GM12878 (cell line): ENCODE measurements at regions of chr15 and their contacts with region 1.

Region 1: DNA sequence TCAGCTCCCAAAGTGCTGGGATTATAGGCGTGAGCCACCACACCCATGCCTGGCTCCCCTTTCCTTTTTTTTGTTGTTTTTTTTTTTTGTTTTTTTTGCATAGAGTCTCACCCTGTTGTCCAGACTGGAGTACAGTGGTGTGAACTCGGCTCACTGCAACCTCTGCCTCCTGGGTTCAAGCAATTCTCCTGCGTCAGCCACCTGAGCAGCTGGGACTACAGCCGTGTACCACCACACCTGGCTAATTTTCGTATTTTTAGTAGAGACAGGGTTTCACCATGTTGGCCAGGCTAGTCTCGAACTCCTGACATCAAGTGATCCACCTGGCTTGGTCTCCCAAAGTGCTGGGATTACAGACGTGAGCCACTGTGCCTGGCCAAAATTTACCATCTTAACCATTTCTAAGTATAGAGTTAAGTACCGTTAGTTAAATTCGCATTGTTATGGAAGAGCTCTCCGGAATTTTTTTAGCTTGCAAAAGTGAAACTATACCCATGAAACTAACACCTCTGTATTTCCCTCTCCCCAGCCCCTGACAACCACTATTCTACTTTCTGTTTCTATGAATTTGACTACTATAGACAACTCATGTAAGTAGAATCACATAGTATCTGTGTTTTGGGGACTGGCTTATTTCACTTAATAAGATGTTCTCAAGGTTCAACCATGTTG is 70.9 kb upstream of the C15orf39 start:
- DNase-seq: peak; percentile 89
- ATAC-seq: peak; percentile 92
- H3K4me3 ChIP-seq: peak overlapping the region; percentile 13; the same call in 1 of the 2 replicates
- H3K27ac ChIP-seq: peak overlapping the region; percentile 99
- H3K4me1 ChIP-seq: peaks cover 67% of the 10 kb centered on the region
- H3K27me3 ChIP-seq: no peaks in the 10 kb centered on the region
- CTCF ChIP-seq: no peak
- EP300 ChIP-seq: peak; percentile 55 to 82; a peak in 3 of 4 replicates
- POLR2A ChIP-seq: no peak
- RAD21 ChIP-seq: 0 out of 2 replicates have a peak, but pooled peaks have one; percentile 9

Region 2: GRCh38 chr15:75161917-75162414 is 31.2 kb after region 1 on chr15:
- CTCF ChIA-PET with region 1: no interaction called
- POLR2A ChIA-PET with region 1: no interaction called
- RAD21 ChIA-PET with region 1: no interaction called
- SMC1A ChIA-PET with region 1: no interaction called
- in situ Hi-C with region 1: no loop called
- intact Hi-C with region 1: no loop called
- DNase-seq: no peak
- ATAC-seq: no peak
- H3K4me3 ChIP-seq: no peak overlapping the region
- H3K27ac ChIP-seq: no peak overlapping the region
- H3K4me1 ChIP-seq: peaks cover 4% of the 10 kb centered on the region
- H3K27me3 ChIP-seq: no peaks in the 10 kb centered on the region
- CTCF ChIP-seq: no peak
- EP300 ChIP-seq: no peak
- POLR2A ChIP-seq: no peak
- RAD21 ChIP-seq: no peak

Region 3: DNA sequence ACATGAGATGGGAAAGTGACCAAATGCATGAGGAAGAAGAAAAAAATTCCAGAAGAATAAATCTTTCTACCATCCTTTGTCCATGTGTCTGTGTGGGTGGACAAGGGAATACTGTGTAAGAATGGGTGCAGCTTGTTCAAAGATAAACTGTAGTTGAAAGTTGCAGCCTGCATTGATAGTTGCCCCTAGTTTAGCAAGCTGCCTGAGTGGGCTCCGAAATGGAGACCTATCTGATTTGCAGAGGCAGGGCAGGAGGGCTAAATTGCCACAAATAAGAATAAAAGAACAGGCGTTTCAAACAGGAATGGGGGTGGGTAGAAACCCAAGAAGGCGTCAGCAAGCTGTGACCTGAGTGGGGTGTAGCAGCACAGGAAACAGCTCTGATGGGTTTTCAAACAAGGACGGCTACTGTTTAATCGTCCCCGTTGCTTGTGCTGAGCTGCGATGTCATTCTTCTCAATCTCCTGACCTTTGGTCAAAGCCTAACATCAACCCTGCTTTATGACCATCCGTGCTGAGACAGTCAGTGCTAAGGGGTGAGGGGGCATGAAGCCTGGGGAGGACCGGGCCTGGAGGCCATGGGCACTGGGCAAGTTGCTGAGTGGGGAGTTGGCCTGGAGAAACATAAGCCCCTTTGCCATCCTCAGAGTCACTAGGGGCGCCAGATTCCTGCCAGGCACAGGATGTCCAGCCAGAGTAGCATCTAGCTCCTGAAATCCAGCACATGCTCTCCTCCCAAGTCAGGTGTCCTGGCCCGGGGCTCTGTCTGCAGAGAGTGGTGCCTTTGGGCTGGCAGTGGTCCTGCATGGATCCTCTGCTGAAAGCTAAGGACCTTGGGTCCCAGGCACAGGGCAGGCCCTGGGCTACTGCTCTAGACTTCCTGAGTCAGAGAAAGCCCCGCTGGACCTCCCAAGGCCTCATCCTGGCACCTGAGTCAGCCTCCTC is 51.7 kb after region 1 on chr15:
- CTCF ChIA-PET with region 1: no interaction called
- POLR2A ChIA-PET with region 1: interaction called, 4 read pairs
- RAD21 ChIA-PET with region 1: no interaction called
- SMC1A ChIA-PET with region 1: interaction called, 8 read pairs
- in situ Hi-C with region 1: no loop called
- intact Hi-C with region 1: loop called (anchors 1 kb)
- DNase-seq: no peak
- ATAC-seq: no peak
- H3K4me3 ChIP-seq: no peak overlapping the region
- H3K27ac ChIP-seq: no peak overlapping the region
- H3K4me1 ChIP-seq: peaks cover 16% of the 10 kb centered on the region
- H3K27me3 ChIP-seq: no peaks in the 10 kb centered on the region
- CTCF ChIP-seq: no peak
- EP300 ChIP-seq: no peak
- POLR2A ChIP-seq: no peak
- RAD21 ChIP-seq: no peak